ENCODE measurements at regions of chr4 and their contacts with region 1.

Region 1: DNA sequence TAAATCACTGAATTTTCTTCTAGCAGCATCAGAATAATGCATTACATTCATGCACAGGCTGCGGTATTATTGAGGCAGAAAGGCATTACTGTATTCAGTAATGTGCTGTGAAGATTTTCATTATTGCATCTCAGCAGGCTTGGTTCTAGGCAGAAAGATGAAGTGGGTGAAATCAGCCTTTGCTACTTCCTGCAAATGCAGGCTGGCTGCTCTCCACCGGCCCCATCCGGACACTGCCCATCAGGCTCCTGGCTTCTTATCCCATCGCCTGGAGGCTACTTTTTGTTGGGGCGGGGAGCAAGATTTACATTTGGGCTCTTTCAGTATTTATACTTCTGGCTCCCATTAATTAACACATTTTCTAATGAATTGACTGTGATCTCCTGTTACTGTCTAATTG is 117.8 kb downstream of the FRAS1 start:
- DNase-seq: no peak
- H3K4me3 ChIP-seq: no peak overlapping the region
- H3K27ac ChIP-seq: no peak overlapping the region
- H3K4me1 ChIP-seq: peaks cover 16% of the 10 kb centered on the region
- H3K27me3 ChIP-seq: no peaks in the 10 kb centered on the region
- CTCF ChIP-seq: no peak

Region 2: DNA sequence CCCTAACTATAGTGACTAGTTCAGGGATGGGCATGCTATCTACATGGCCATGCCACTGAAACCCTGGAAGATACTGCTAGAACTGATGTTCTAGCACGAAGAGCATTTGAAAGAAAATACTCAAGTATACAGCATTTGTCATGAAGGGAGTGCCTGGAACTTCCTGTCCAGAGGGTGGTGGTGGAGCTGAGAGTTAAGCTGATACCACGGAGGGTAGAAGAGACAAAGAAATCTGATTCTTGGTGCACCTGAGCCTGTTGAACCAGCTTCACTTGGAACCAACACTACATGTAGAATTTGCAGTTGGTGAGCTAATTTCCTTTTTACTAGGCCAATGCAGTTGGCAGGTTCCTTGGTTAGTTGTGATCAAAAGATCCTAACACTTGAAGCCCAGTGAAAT is 901.5 kb before region 1 on chr4:
- CTCF ChIA-PET with region 1: no interaction called
- dilution Hi-C with region 1: no loop called
- in situ Hi-C with region 1: no loop called
- intact Hi-C with region 1: no loop called
- DNase-seq: no peak
- H3K4me3 ChIP-seq: no peak overlapping the region
- H3K27ac ChIP-seq: no peak overlapping the region
- H3K4me1 ChIP-seq: peaks cover 7% of the 10 kb centered on the region
- H3K27me3 ChIP-seq: peaks cover 2% of the 10 kb centered on the region
- CTCF ChIP-seq: no peak

Region 3: GRCh38 chr4:77765720-77766119 is 409.2 kb before region 1 on chr4:
- CTCF ChIA-PET with region 1: no interaction called
- dilution Hi-C with region 1: no loop called
- in situ Hi-C with region 1: no loop called
- intact Hi-C with region 1: no loop called
- DNase-seq: no peak
- H3K4me3 ChIP-seq: no peak overlapping the region
- H3K27ac ChIP-seq: no peak overlapping the region
- H3K4me1 ChIP-seq: no peaks in the 10 kb centered on the region
- H3K27me3 ChIP-seq: no peaks in the 10 kb centered on the region
- CTCF ChIP-seq: no peak

Region 4: GRCh38 chr4:78121338-78121904 is 53.5 kb before region 1 on chr4:
- CTCF ChIA-PET with region 1: no interaction called
- dilution Hi-C with region 1: no loop called
- in situ Hi-C with region 1: no loop called
- intact Hi-C with region 1: no loop called
- DNase-seq: no peak
- H3K4me3 ChIP-seq: no peak overlapping the region
- H3K27ac ChIP-seq: no peak overlapping the region
- H3K4me1 ChIP-seq: no peaks in the 10 kb centered on the region
- H3K27me3 ChIP-seq: no peaks in the 10 kb centered on the region
- CTCF ChIP-seq: no peak

Region 5: DNA sequence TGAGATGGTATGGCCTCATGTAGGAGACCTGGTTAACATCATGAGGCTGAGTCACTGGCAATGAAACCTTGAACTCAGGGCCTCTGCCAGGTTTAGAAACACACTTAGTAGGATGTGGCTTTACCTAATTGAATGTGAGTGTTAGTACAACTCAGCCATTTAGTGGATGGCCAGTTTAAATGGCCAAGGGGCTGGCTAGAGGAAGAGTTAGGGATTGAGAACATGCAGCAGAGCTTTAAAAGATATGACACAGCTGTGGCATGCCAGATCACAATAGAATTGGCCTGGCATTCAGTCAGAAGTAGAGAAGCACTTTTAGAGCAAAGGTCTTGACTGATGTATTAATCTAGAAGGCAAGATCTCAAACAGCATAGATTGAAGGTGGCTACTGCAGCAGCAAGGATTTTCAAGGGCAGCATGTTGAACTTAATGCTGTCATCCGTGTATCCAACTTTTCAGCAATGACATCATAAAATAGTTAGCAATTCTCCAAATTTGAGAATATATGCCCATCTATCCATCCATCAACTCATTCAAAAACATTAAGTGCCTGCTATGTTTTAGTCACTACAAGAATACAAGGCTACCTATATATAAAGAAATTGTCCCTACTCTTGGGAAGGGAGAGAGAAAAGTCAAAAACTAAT is 52.6 kb after region 1 on chr4:
- CTCF ChIA-PET with region 1: no interaction called
- dilution Hi-C with region 1: no loop called
- in situ Hi-C with region 1: no loop called
- intact Hi-C with region 1: loop called (anchors 5 kb)
- DNase-seq: no peak
- H3K4me3 ChIP-seq: no peak overlapping the region
- H3K27ac ChIP-seq: no peak overlapping the region
- H3K4me1 ChIP-seq: no peaks in the 10 kb centered on the region
- H3K27me3 ChIP-seq: no peaks in the 10 kb centered on the region
- CTCF ChIP-seq: no peak